Activated B cell treated with CpG ODN at 0.5 μM for 24 hours (primary cell): ENCODE measurements at regions of chr1 and their contacts with region 1.

Region 1: GRCh38 chr1:119675349-119676345 is 27.6 kb upstream of the ZNF697 start:
- DNase-seq: peak; percentile 15
- ATAC-seq: no peak
- H3K4me3 Mint-ChIP-seq: peak overlapping the region; percentile 72
- H3K27ac Mint-ChIP-seq: no peak overlapping the region
- H3K4me1 Mint-ChIP-seq: peaks cover 6% of the 10 kb centered on the region
- H3K27me3 Mint-ChIP-seq: peaks cover 24% of the 10 kb centered on the region
- CTCF ChIP-seq: peak; percentile 65

Region 2: DNA sequence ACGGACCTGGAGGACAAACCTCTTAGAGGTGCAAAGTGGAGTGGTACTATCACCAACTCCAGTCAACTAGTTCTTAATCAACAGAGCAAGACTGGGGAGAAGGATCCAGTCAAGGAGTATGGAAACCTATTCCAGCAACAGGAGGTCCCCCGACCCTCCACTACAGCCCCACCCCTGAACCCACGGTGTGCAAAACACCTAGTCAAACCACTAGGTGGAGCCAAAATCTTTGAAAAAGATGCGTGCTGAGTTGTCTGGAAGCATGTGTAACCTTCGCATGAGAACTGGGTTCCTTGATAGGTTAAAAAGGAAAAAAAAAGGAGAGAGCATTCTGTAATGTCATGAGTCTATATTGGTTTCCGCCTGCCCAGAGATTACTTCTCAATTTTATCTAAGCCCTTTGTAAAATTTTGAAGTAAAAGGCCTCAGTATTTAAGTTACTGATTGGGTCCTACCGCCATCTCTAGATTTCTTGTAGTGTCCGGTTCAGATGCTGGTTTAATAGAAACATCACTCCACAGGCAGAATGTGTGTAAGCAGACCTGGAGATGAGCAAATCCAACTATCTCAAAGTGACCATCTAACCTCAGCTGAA is 389.0 kb before region 1 on chr1:
- CTCF ChIA-PET with region 1: no interaction called
- POLR2A ChIA-PET with region 1: no interaction called
- intact Hi-C with region 1: loop called (anchors 2 kb)
- DNase-seq: no peak
- ATAC-seq: no peak
- H3K4me3 Mint-ChIP-seq: no peak overlapping the region
- H3K27ac Mint-ChIP-seq: no peak overlapping the region
- H3K4me1 Mint-ChIP-seq: no peaks in the 10 kb centered on the region
- H3K27me3 Mint-ChIP-seq: peaks cover 6% of the 10 kb centered on the region
- CTCF ChIP-seq: no peak

Region 3: DNA sequence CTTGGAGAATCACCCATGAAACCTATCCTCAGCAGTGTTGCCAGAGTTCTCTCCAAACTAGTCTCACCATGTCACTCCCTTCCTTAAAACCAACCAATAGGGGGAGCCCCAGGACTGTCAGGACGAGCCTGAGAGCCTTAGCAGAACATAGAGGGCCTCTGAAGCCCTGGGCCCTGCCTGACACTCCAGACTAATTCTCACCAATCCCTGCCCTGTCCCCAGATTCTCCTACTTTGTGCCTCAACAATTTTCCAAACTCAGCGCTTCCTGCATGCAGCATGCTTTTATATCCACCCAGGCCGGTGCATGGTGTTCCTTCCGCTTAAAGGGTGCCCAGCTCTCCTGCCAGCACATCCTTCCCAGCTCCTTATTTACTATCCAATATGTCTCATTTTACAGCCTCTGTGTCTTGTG is 125.9 kb before region 1 on chr1:
- CTCF ChIA-PET with region 1: interaction called, 15 read pairs
- POLR2A ChIA-PET with region 1: no interaction called
- intact Hi-C with region 1: no loop called
- DNase-seq: no peak
- ATAC-seq: peak; percentile 34
- H3K4me3 Mint-ChIP-seq: no peak overlapping the region
- H3K27ac Mint-ChIP-seq: no peak overlapping the region
- H3K4me1 Mint-ChIP-seq: peaks cover 4% of the 10 kb centered on the region
- H3K27me3 Mint-ChIP-seq: no peaks in the 10 kb centered on the region
- CTCF ChIP-seq: no peak

Region 4: GRCh38 chr1:119582801-119583200 is 92.8 kb before region 1 on chr1:
- CTCF ChIA-PET with region 1: interaction called, 3 read pairs
- POLR2A ChIA-PET with region 1: no interaction called
- intact Hi-C with region 1: loop called (anchors 1 kb)
- DNase-seq: no peak
- ATAC-seq: peak; percentile 42
- H3K4me3 Mint-ChIP-seq: no peak overlapping the region
- H3K27ac Mint-ChIP-seq: no peak overlapping the region
- H3K4me1 Mint-ChIP-seq: no peaks in the 10 kb centered on the region
- H3K27me3 Mint-ChIP-seq: peaks cover 2% of the 10 kb centered on the region
- CTCF ChIP-seq: no peak

Region 5: GRCh38 chr1:119613769-119614720 is 61.6 kb before region 1 on chr1:
- CTCF ChIA-PET with region 1: interaction called, 13 read pairs
- POLR2A ChIA-PET with region 1: no interaction called
- intact Hi-C with region 1: loop called (anchors 1 kb)
- DNase-seq: peak; percentile 28
- ATAC-seq: peak; percentile 71
- H3K4me3 Mint-ChIP-seq: no peak overlapping the region
- H3K27ac Mint-ChIP-seq: no peak overlapping the region
- H3K4me1 Mint-ChIP-seq: peaks cover 2% of the 10 kb centered on the region
- H3K27me3 Mint-ChIP-seq: peaks cover 5% of the 10 kb centered on the region
- CTCF ChIP-seq: no peak

Region 6: DNA sequence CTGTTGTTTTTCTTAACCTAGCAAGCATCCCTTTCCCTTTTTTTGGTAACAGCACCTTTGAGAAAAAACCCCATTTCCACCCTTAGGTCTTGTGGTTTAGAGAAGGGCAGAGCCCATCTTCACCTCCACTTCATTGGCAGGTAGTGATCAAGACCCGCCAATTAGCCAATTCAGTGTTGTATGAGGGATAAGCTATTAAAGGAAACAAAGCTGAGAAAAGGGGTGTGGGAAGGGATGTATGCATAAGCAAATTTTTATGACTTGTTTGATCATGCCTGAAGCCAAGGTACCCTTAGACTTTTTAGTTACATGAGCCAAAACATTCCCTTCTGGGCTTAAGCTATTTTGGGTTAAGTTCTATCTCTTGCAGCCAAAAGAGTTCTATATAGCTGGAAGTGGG is 24.0 kb before region 1 on chr1:
- CTCF ChIA-PET with region 1: no interaction called
- POLR2A ChIA-PET with region 1: no interaction called
- intact Hi-C with region 1: no loop called
- DNase-seq: no peak
- ATAC-seq: no peak
- H3K4me3 Mint-ChIP-seq: no peak overlapping the region
- H3K27ac Mint-ChIP-seq: no peak overlapping the region
- H3K4me1 Mint-ChIP-seq: peaks cover 11% of the 10 kb centered on the region
- H3K27me3 Mint-ChIP-seq: peaks cover 51% of the 10 kb centered on the region
- CTCF ChIP-seq: no peak

Region 7: GRCh38 chr1:119662034-119662437 is 13.6 kb before region 1 on chr1:
- CTCF ChIA-PET with region 1: interaction called, 15 read pairs
- POLR2A ChIA-PET with region 1: interaction called, 3 read pairs
- intact Hi-C with region 1: no loop called
- DNase-seq: no peak
- ATAC-seq: no peak
- H3K4me3 Mint-ChIP-seq: no peak overlapping the region
- H3K27ac Mint-ChIP-seq: no peak overlapping the region
- H3K4me1 Mint-ChIP-seq: no peaks in the 10 kb centered on the region
- H3K27me3 Mint-ChIP-seq: peaks cover 12% of the 10 kb centered on the region
- CTCF ChIP-seq: no peak